ENCODE measurements at regions of chr19 and their contacts with region 1.

Region 1: GRCh38 chr19:18167975-18168645 is 5.5 kb upstream of the IFI30 start:
- DNase-seq: peak; percentile 52
- ATAC-seq: peak; percentile 34
- H3K4me3 Mint-ChIP-seq: peak overlapping the region; percentile 66
- H3K27ac Mint-ChIP-seq: peak overlapping the region; percentile 82
- H3K4me1 Mint-ChIP-seq: peaks cover 53% of the 10 kb centered on the region
- H3K27me3 Mint-ChIP-seq: no peaks in the 10 kb centered on the region
- CTCF ChIP-seq: peak; percentile 44

Region 2: DNA sequence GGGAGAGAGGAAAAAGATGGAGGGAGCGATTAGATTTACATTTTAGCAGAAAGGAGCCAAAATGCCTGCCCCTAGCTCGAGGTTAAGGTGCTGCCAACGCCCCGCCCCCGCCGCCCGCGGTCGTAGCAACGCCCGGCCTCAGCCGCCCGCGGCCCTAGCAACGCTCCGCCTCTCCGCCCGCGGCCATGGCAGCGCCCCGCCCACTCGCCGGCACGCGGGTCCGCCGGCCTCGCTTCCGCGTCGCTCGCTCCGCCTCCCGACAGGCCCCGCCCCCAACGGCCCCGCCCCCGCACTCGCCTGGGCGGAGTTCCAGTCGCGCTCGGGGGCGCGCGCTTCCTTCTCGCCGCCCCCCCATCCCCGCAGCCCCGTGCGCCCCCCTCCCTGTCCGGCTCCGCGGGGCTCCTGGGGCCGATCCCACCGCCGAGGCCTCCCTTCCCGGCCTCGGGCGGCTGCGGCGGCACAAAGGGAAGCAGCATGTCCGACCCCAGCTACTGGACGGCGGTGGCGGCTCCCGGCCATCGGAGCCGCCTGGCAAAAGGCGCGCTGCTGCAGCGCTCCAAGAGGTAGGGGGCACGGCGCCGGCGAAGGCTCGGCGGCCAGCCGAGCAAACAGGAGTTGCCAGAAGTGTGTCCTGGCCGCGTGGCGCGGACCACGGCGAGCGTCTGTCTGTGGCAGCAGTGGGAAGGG is 50.3 kb before region 1 on chr19:
- CTCF ChIA-PET with region 1: interaction called, 5 read pairs
- POLR2A ChIA-PET with region 1: interaction called, 8 read pairs
- intact Hi-C with region 1: loop called (anchors 1 kb)
- DNase-seq: peak; percentile 98
- ATAC-seq: peak; percentile 93
- H3K4me3 Mint-ChIP-seq: peak overlapping the region; percentile 75
- H3K27ac Mint-ChIP-seq: peak overlapping the region; percentile 77
- H3K4me1 Mint-ChIP-seq: peaks cover 40% of the 10 kb centered on the region
- H3K27me3 Mint-ChIP-seq: no peaks in the 10 kb centered on the region
- CTCF ChIP-seq: no peak

Region 3: GRCh38 chr19:18179957-18180356 is 11.8 kb after region 1 on chr19:
- CTCF ChIA-PET with region 1: interaction called, 7 read pairs
- POLR2A ChIA-PET with region 1: interaction called, 437 read pairs
- intact Hi-C with region 1: loop called (anchors 1 kb)
- DNase-seq: no peak
- ATAC-seq: peak; percentile 23
- H3K4me3 Mint-ChIP-seq: peak overlapping the region; percentile 53
- H3K27ac Mint-ChIP-seq: peak overlapping the region; percentile 79
- H3K4me1 Mint-ChIP-seq: peaks cover 66% of the 10 kb centered on the region
- H3K27me3 Mint-ChIP-seq: no peaks in the 10 kb centered on the region
- CTCF ChIP-seq: no peak

Region 4: GRCh38 chr19:18224525-18225354 is 56.6 kb after region 1 on chr19:
- CTCF ChIA-PET with region 1: no interaction called
- POLR2A ChIA-PET with region 1: no interaction called
- intact Hi-C with region 1: no loop called
- DNase-seq: peak; percentile 77
- ATAC-seq: peak; percentile 98
- H3K4me3 Mint-ChIP-seq: peak overlapping the region; percentile 84
- H3K27ac Mint-ChIP-seq: peak overlapping the region; percentile 35
- H3K4me1 Mint-ChIP-seq: peaks cover 45% of the 10 kb centered on the region
- H3K27me3 Mint-ChIP-seq: peaks cover 55% of the 10 kb centered on the region
- CTCF ChIP-seq: no peak